GM13976 (cell line): ENCODE measurements at regions of chr2 and their contacts with region 1.

Region 1: DNA sequence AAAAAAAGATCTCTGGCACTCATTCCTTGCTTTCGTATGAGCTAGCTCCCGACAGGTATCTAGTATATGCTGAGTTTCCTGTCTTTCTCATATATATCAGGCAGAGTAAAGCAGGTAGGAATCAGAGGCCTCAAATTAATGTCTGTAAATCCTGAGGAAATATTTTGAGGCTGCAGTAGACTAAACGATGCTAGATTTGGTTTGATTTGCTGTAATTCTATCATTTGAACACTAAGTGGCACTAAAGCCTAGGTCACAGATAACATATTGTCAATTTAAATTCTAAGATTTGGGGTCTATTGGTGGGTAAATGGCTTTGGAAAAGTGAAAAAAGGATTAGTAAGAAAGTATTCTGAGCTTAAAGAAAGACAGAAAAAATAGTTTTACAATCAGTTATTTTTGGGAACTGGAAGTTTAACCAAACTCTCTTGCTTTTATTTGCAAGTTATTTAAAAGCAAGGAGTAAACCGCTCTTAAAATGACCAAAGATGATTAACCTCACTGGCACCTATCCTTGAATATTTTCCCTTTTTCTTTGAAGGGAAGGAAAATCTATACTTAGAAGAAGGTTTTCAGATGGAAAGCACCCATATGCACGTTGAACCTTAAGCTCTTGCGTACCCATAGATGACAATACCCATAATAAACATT is 37.6 kb upstream of the SLC4A10 start:
- DNase-seq: no peak
- CTCF ChIP-seq: peak; percentile 43

Region 2: GRCh38 chr2:161703863-161704262 is 117.2 kb after region 1 on chr2:
- in situ Hi-C with region 1: no loop called
- DNase-seq: no peak
- CTCF ChIP-seq: no peak

Region 3: GRCh38 chr2:161938339-161938738 is 351.7 kb after region 1 on chr2:
- in situ Hi-C with region 1: loop called (anchors 10 kb)
- DNase-seq: no peak
- CTCF ChIP-seq: no peak

Region 4: GRCh38 chr2:162123806-162124758 is 537.4 kb after region 1 on chr2:
- in situ Hi-C with region 1: loop called (anchors 25 kb)
- DNase-seq: peak; percentile 62
- CTCF ChIP-seq: peak; percentile 47